ENCODE measurements at regions of chr11 and their contacts with region 1.

Region 1: GRCh38 chr11:93234602-93235207 is 36.9 kb upstream of the SLC36A4 start:
- DNase-seq: peak; percentile 69 to 78 (median 72)
- ATAC-seq: peak; percentile 99 to 100 (median 99)
- H3K4me3 ChIP-seq: no peak overlapping the region
- H3K27ac ChIP-seq: no peak overlapping the region
- H3K4me1 ChIP-seq: no peaks in the 10 kb centered on the region
- H3K27me3 ChIP-seq: no peaks in the 10 kb centered on the region
- CTCF ChIP-seq: peak; percentile 90 to 97 (median 92)
- POLR2A ChIP-seq: no peak

Region 2: GRCh38 chr11:92969634-92970347 is 264.9 kb before region 1 on chr11 and contains the start of gene MTNR1B:
- intact Hi-C with region 1: no loop called
- DNase-seq: no peak
- ATAC-seq: peak in 2 of 4 donors; percentile 40 to 54
- H3K4me3 ChIP-seq: peak within 1 kb of the TSS in 1 of 3 donors; percentile 26
- H3K27ac ChIP-seq: no peak within 1 kb of the TSS
- H3K4me1 ChIP-seq: peaks cover 0 to 10% (median 0%) of the 10 kb centered on the region in 4 donors
- H3K27me3 ChIP-seq: no peaks in the 10 kb centered on the region
- CTCF ChIP-seq: no peak
- POLR2A ChIP-seq: no peak
- total RNA-seq, gene MTNR1B: not detected

Region 3: DNA sequence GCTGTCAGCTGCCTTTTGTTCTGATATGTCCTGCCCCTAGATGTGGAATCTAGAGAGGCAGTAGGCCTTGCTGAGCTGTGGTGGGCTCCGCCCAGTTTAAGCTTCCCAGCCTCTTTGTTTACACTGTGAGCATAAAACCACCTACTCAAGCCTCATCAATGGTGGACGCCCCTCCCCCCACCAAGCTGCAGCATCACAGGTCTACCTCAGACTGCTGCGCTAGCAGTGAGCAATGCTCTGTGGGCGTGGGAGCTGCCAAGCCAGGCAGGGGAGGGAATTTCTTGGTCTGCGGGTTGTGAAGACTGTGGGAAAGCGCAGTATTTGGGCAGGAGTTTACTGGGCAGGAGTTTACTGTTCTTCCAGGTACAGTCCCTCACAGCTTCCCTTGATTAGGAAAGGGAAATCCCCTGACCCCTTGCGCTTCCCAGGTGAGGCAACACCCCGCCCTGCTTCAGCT is 209.9 kb after region 1 on chr11:
- intact Hi-C with region 1: no loop called
- DNase-seq: no peak
- ATAC-seq: no peak
- H3K4me3 ChIP-seq: no peak overlapping the region
- H3K27ac ChIP-seq: no peak overlapping the region
- H3K4me1 ChIP-seq: no peaks in the 10 kb centered on the region
- H3K27me3 ChIP-seq: no peaks in the 10 kb centered on the region
- CTCF ChIP-seq: no peak
- POLR2A ChIP-seq: no peak

Region 4: GRCh38 chr11:93623179-93623578 is 388.5 kb after region 1 on chr11:
- intact Hi-C with region 1: loop called in 1 of 2 experiments (anchors 10 kb)
- DNase-seq: no peak
- ATAC-seq: peak in 2 of 4 donors; percentile 48 to 51
- H3K4me3 ChIP-seq: no peak overlapping the region
- H3K27ac ChIP-seq: no peak overlapping the region
- H3K4me1 ChIP-seq: no peaks in the 10 kb centered on the region
- H3K27me3 ChIP-seq: no peaks in the 10 kb centered on the region
- CTCF ChIP-seq: no peak
- POLR2A ChIP-seq: no peak

Region 5: GRCh38 chr11:93652161-93652597 is 417.5 kb after region 1 on chr11:
- intact Hi-C with region 1: loop called (anchors 10 kb)
- DNase-seq: no peak
- ATAC-seq: peak in 3 of 4 donors; percentile 44 to 57 (median 51)
- H3K4me3 ChIP-seq: no peak overlapping the region
- H3K27ac ChIP-seq: no peak overlapping the region
- H3K4me1 ChIP-seq: no peaks in the 10 kb centered on the region
- H3K27me3 ChIP-seq: no peaks in the 10 kb centered on the region
- CTCF ChIP-seq: peak; percentile 75 to 82 (median 80)
- POLR2A ChIP-seq: no peak

Measured in right lobe of liver (tissue), 6 donors.